Left lung (tissue), 14 donors: ENCODE measurements at regions of chr4 and their contacts with region 1.

Region 1: DNA sequence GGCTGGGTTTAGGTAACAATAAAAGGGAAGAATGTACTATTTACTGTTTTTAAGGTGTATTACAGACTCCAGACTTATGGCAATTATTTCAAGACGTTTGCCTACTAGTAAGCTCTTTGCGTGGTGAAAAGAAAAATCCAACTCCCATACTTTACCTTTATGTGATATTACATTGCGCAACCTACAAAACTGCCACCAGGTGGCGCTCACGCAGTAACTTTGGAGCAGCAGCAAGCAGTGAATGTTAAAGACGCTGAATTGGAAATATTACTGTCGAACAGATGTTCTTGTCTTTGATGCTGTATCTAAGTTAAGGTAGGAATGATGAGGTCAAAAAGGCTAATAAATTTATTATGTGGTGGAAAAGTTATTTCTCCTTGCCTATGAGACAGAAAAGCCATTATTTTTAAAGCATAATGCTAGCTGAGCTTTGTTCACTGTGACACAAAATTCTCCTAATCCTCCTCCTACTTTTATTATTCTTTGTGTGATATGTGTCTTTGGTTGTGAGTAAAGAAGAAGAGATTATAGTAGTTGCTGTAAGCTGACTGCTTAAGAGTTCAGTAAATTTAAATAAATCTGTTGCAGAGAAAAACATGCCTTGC is 1099.8 kb upstream of the TENM3 start:
- DNase-seq: peak; percentile 54 to 87 (median 78)
- ATAC-seq: peak; percentile 72
- H3K4me3 ChIP-seq: no peak overlapping the region
- H3K27ac ChIP-seq: no peak overlapping the region
- H3K4me1 ChIP-seq: no peaks in the 10 kb centered on the region
- H3K27me3 ChIP-seq: peaks cover 0 to 4% of the 10 kb centered on the region in 2 donors
- CTCF ChIP-seq: peak; percentile 72 to 89

Region 2: GRCh38 chr4:180669680-180670079 is 473.7 kb before region 1 on chr4:
- intact Hi-C with region 1: no loop called
- DNase-seq: no peak
- ATAC-seq: no peak
- H3K4me3 ChIP-seq: no peak overlapping the region
- H3K27ac ChIP-seq: no peak overlapping the region
- H3K4me1 ChIP-seq: no peaks in the 10 kb centered on the region
- H3K27me3 ChIP-seq: no peaks in the 10 kb centered on the region
- CTCF ChIP-seq: no peak

Region 3: GRCh38 chr4:181536811-181537434 is 393.6 kb after region 1 on chr4:
- intact Hi-C with region 1: loop called in 1 of 2 experiments (anchors 10 kb)
- DNase-seq: no peak
- ATAC-seq: no peak
- H3K4me3 ChIP-seq: no peak overlapping the region
- H3K27ac ChIP-seq: no peak overlapping the region
- H3K4me1 ChIP-seq: no peaks in the 10 kb centered on the region
- H3K27me3 ChIP-seq: no peaks in the 10 kb centered on the region
- CTCF ChIP-seq: no peak